ENCODE measurements at regions of chr4 and their contacts with region 1.

Region 1: GRCh38 chr4:148288448-148288847 is 153.8 kb downstream of the NR3C2 start:
- DNase-seq: no peak
- H3K4me3 ChIP-seq: no peak overlapping the region
- H3K27ac ChIP-seq: no peak overlapping the region
- H3K4me1 ChIP-seq: no peaks in the 10 kb centered on the region
- H3K27me3 ChIP-seq: no peaks in the 10 kb centered on the region
- CTCF ChIP-seq: no peak

Region 2: GRCh38 chr4:149031399-149031798 is 743.0 kb after region 1 on chr4:
- CTCF ChIA-PET with region 1: no interaction called
- dilution Hi-C with region 1: no loop called
- in situ Hi-C with region 1: no loop called
- intact Hi-C with region 1: loop called (anchors 2 kb)
- DNase-seq: peak; percentile 11
- H3K4me3 ChIP-seq: no peak overlapping the region
- H3K27ac ChIP-seq: no peak overlapping the region
- H3K4me1 ChIP-seq: no peaks in the 10 kb centered on the region
- H3K27me3 ChIP-seq: no peaks in the 10 kb centered on the region
- CTCF ChIP-seq: peak; percentile 56 to 74

Measured in mammary epithelial cell (primary cell).